ENCODE measurements at regions of chr11 and their contacts with region 1.

Region 1: GRCh38 chr11:85589373-85589772 is 37.8 kb downstream of the DLG2 start:
- DNase-seq: no peak
- H3K4me3 ChIP-seq: no peak overlapping the region
- H3K27ac ChIP-seq: no peak overlapping the region
- H3K4me1 ChIP-seq: no peaks in the 10 kb centered on the region
- H3K27me3 ChIP-seq: no peaks in the 10 kb centered on the region
- CTCF ChIP-seq: no peak

Region 2: DNA sequence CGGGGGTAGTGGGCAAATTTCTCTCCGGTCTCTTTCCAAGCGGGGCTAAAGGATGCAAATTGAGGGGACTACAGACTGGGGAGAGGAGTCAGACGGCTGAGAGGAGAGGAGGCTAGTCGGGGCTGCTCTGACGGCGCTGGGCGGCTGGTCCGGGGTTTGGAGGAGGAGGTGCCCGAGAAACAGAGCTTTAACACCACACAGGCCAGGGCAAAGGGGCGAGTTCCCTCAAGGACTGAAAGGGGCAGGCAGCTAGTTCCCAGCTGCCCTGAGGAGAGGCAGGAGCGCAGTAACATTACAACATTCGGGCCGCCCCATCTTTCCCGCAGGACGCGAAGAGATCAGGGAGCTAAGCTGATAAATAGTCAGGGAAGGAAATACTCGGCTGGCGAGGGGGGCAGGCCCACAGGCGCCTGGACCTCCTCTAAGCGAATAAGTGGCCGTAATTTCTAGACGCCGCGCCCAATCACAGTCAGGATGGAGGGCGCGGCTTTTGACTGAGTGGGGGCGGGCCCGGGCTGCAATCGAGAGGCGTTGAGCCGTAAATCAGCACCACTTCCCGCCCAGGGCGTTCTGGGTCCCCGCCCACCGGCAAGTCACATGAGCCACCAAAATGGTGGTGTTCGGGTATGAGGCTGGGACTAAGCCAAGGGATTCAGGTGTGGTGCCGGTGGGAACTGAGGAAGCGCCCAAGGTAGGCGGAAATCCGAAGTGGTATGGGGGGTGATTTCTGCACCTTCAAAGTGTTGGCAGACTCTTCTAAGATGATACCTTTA is 38.8 kb after region 1 on chr11 and contains the start of gene TMEM126B:
- intact Hi-C with region 1: no loop called
- DNase-seq: peak; percentile 99
- H3K4me3 ChIP-seq: peak within 1 kb of the TSS; percentile 84 to 88
- H3K27ac ChIP-seq: peak within 1 kb of the TSS; percentile 93 to 95
- H3K4me1 ChIP-seq: peaks cover 0 to 39% (median 16%) of the 10 kb centered on the region in 4 donors
- H3K27me3 ChIP-seq: no peaks in the 10 kb centered on the region
- CTCF ChIP-seq: no peak

Region 3: DNA sequence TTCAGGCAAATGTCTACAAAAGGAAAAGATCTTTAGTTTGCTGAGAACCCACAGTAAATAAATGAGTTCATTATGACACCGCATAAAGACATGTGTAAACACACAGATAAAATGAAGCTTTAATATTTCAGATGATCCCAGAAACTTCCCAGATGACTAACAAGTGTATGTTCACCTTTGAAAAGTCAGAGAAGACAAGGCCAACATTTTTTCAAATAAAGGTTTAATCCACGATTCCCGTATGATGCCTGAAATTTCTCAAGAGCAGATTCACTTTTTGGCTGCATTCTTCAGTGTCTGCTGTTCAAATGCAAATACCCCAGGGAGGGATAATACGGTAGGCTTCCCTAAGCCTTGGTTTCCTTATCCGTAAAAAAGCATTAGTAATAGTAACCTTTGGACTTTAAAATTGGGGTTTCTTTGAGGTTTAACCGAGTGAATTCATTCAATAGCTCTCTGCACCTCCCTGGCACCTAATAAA is 159.1 kb after region 1 on chr11:
- intact Hi-C with region 1: loop called (anchors 5 kb)
- DNase-seq: no peak
- H3K4me3 ChIP-seq: no peak overlapping the region
- H3K27ac ChIP-seq: no peak overlapping the region
- H3K4me1 ChIP-seq: peaks cover 0 to 44% (median 21%) of the 10 kb centered on the region in 4 donors
- H3K27me3 ChIP-seq: no peaks in the 10 kb centered on the region
- CTCF ChIP-seq: no peak

Region 4: DNA sequence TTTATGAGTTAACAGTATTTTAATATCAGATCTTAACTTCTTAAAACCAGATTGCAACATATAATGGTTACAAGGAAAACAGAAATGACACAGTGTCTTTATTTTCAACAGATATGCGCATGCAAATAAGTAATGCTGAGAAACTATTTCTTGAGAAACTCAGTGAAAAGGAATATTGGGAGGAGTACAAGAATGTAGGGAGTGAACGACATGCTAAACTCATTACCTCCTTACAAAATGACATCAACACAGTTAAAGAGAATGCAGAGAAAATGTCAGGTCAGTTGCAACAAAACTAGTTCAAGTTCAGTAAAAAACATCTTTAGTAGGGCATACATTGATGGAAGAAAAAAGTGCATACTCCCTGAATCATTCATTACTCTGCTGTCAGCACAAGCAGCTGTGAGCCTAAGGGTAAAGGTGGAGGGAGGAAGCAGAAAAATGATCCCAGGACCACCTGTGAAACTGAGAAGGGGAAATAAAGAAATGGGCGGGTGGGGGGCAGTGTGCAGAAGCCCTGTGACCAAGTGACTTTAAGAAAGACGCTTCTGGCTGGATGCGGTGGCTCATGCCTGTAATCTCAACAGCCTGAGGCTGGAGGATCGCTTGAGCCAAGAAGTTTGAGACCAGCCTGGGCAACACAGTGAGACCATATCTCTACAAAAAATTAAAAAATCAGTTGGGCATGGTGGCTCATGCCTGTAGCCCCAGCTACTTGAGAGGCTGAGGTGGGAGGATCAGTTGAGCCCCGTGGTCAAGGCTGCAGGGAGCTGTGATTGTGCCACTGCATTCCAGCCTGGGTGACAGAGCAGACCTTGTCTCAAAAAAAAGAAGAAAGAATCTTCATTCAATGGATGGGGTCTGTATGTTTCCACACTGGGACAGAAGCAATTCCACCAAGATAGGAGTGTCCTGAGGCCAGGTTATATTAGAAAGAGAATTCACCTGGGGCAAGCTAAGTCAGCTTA is 297.0 kb after region 1 on chr11:
- intact Hi-C with region 1: no loop called
- DNase-seq: no peak
- H3K4me3 ChIP-seq: no peak overlapping the region
- H3K27ac ChIP-seq: no peak overlapping the region
- H3K4me1 ChIP-seq: peaks cover 0 to 11% (median 0%) of the 10 kb centered on the region in 4 donors
- H3K27me3 ChIP-seq: no peaks in the 10 kb centered on the region
- CTCF ChIP-seq: no peak